ENCODE measurements at regions of chr17 and their contacts with region 1.

Region 1: DNA sequence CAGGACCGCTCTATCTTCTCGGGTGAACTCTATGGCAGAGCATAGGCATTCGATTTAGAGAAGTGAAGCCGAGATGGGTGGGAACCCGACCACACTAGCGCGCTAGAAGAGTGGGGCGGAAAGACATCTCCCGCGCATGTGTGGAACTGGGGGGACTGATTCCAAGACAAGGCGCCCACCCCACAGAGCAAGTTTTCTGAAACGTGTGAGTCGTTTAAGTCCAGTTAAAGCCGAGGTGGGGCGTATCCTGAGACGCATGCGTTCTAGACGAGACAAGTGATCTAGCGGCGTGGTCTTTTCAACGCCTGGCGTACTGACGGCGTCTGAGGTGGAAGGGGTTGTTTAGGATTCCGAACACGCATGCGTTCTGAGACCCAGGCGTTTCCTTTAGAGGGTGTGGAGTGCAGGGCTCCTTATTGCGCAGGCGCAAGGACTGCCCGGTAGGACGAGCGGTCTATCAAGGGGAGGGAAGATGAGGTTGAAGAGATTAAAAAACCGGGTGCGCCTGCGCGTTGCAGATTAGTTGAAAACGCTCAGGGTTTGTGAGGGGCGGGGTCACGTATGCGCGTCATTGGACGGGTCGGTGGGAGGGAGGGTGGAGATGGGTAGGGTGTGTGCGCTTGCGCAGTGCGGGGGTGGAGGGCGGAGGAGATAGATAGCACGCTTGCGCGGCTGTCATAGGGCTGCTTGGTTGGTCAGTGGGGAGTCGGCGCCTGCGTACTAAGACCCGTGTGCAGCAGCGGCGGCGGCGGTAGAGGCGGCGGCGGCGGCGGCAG is at the start of gene EIF5A:
- DNase-seq: peak; percentile 100
- H3K4me3 ChIP-seq: peak within 1 kb of the TSS; percentile 87
- H3K27ac ChIP-seq: peak within 1 kb of the TSS; percentile 87
- H3K27me3 ChIP-seq: no peaks in the 10 kb centered on the region
- CTCF ChIP-seq: no peak
- polyA plus RNA-seq, gene EIF5A: 466 and 469 TPM in 2 replicates

Region 2: DNA sequence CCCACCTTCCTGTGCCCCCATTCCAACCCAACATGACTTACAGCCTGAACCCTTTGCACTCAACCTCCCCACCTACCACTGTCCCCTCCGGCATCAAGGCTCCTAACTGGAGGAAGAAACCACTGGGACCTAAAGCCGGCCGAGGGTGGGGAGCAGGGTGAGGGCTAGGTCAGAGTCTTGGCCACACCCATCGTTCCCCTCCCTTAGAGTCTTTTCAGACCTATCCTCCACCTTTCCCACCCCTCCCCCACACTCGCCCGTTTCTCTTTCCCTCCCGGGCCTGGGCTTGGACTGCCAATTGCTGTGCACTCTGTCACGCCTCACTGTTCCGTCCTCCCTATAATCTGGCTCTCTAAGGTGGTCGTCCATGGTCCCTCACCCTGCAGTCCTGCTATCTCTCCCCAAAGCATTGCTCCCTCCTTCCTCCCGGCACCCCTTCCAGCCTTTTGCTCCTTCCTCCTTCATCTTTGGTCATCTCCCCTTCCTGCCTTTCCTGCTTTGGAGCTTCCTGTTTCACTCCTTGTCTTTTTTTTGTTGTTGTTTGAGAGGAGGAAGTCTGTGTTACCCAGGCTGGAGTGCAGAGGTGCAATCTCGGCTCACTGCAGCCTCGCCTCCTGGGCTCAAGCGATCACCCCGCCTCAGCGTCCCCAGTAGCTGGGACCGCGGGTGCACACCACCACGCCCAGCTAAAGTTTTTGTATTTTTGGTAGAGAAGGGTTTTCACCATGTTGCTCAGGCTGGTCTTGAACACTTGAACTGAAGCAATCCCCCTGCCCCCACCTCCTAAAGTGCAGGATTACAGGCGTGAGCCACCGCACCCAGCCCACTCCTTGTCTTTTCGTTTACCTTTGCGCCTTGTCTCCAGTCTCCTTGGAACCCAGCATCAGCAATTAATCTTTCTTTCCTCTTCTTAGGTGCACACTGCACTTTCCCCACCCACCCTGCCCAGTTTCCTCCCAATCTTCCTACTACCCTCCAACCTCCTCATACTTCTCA is 43.7 kb before region 1 on chr17:
- CTCF ChIA-PET with region 1: no interaction called
- POLR2A ChIA-PET with region 1: interaction called, 10 read pairs
- DNase-seq: no peak
- H3K4me3 ChIP-seq: no peak overlapping the region
- H3K27ac ChIP-seq: no peak overlapping the region
- H3K27me3 ChIP-seq: peaks cover 8% of the 10 kb centered on the region
- CTCF ChIP-seq: no peak

Region 3: GRCh38 chr17:7296189-7296902 is 10.8 kb before region 1 on chr17:
- CTCF ChIA-PET with region 1: interaction called, 20 read pairs
- POLR2A ChIA-PET with region 1: no interaction called
- DNase-seq: no peak
- H3K4me3 ChIP-seq: peak overlapping the region; percentile 27; the same call in 1 of the 2 replicates
- H3K27ac ChIP-seq: no peak overlapping the region
- H3K27me3 ChIP-seq: peaks cover 29% of the 10 kb centered on the region
- CTCF ChIP-seq: peak; percentile 85